Activated CD8-positive, alpha-beta T cell treated with anti-CD3 and anti-CD28 coated beads, Interleukin-2, amount 10 ng/mL, durations not matched to agents 7 days and 5 days (primary cell): ENCODE measurements at regions of chr6 and their contacts with region 1.

Region 1: DNA sequence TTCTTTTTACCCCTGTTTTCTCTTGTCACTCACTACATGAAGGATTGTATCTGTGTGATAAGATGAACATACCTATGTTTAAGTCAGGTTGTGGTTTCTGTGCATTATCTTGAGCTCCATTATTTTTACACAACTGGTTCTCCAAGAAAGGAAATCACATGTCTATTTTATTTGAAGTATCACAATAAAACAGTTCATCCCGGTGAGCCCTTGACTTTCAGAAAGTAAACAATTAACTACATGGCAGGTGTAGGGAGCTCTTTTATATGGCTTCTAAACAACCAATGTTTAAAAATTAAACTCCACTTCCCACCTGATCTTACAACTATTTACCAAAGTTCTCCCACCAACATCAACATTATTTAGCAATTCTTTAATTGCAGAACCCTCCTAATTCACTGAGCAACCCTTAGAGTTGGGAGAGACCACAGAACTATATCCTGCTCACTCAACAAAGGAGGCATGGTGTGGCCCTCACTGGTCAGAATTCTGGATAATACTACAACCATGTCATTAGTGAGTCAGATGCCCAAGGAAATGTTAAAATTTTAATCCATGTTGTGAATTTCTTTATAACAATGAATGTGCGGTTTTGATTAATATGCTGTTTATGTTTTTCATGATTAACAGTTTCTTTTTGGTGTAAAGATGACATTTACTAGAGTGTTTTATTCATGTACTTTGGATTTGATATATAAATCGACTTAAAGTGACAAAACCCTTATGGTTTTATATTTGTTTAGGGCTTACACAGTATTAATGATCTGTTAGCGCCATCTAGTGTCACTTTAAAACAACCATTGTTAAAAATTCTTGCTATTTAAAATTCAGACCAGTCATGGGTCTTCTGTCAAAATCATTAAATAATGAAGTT is 50.0 kb upstream of the SCGN start:
- DNase-seq: no peak
- ATAC-seq: no peak
- H3K4me3 Mint-ChIP-seq: no peak overlapping the region
- H3K27ac Mint-ChIP-seq: no peak overlapping the region
- H3K4me1 Mint-ChIP-seq: no peaks in the 10 kb centered on the region
- H3K27me3 Mint-ChIP-seq: no peaks in the 10 kb centered on the region

Region 2: DNA sequence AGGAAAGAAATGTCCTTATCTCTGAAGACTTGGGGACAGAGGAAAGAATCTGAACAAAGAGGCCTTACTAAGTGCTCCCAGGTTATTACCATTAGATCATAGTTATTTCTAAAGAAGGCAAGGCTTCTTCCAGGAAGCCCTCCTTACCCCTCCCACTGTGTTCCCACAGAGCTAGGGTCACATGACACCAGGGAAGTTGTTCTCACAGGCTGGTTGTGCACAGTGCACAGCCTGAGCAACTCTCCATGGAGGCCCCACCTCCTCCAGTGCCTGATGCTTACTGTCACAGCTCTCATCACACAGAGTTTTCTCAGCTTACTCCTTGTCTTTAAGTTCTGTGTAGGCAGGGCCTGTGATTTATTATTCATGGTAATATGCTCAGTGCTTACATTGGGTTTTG is 18.9 kb before region 1 on chr6:
- CTCF ChIA-PET with region 1: interaction called, 11 read pairs
- POLR2A ChIA-PET with region 1: no interaction called
- DNase-seq: peak; percentile 47
- ATAC-seq: peak; percentile 73
- H3K4me3 Mint-ChIP-seq: no peak overlapping the region
- H3K27ac Mint-ChIP-seq: no peak overlapping the region
- H3K4me1 Mint-ChIP-seq: peaks cover 31% of the 10 kb centered on the region
- H3K27me3 Mint-ChIP-seq: no peaks in the 10 kb centered on the region

Region 3: GRCh38 chr6:25590986-25591385 is 11.1 kb before region 1 on chr6:
- CTCF ChIA-PET with region 1: interaction called, 11 read pairs
- POLR2A ChIA-PET with region 1: no interaction called
- DNase-seq: no peak
- ATAC-seq: no peak
- H3K4me3 Mint-ChIP-seq: no peak overlapping the region
- H3K27ac Mint-ChIP-seq: no peak overlapping the region
- H3K4me1 Mint-ChIP-seq: no peaks in the 10 kb centered on the region
- H3K27me3 Mint-ChIP-seq: no peaks in the 10 kb centered on the region

Region 4: DNA sequence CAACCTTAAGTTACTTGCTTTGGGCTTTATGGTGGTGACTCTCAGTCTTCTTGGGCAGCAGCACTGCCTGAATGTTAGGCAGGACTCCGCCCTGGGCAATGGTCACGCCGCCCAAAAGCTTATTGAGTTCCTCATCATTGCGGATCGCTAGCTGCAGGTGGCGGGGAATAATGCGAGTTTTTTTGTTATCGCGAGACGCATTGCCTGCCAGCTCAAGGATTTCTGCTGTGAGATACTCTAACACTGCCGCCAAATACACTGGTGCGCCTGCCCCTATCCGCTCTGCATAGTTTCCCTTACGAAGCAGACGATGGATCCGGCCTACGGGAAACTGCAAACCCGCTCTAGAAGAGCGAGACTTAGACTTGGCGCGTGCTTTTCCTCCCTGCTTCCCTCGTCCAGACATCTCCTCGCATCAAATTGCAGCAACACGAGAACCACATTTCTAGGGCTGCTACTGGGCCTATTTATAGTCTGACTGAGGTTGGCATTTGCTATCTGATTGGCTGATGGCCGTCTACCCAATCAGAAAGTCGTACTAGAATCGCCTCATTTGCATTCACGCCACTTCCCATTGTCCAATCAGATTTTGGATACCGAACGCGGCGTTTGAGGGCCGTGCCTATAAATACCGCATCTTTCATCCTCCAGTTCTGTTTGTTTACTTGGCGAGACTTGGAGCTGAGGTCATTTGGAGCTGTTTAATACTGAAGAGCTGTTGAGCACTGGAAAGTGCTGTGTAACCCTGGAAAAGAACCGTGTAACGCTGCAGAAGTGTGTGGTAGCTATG is 124.3 kb after region 1 on chr6:
- CTCF ChIA-PET with region 1: no interaction called
- POLR2A ChIA-PET with region 1: no interaction called
- DNase-seq: no peak
- ATAC-seq: no peak
- H3K4me3 Mint-ChIP-seq: no peak overlapping the region
- H3K27ac Mint-ChIP-seq: no peak overlapping the region
- H3K4me1 Mint-ChIP-seq: no peaks in the 10 kb centered on the region
- H3K27me3 Mint-ChIP-seq: peaks cover 20% of the 10 kb centered on the region

Region 5: DNA sequence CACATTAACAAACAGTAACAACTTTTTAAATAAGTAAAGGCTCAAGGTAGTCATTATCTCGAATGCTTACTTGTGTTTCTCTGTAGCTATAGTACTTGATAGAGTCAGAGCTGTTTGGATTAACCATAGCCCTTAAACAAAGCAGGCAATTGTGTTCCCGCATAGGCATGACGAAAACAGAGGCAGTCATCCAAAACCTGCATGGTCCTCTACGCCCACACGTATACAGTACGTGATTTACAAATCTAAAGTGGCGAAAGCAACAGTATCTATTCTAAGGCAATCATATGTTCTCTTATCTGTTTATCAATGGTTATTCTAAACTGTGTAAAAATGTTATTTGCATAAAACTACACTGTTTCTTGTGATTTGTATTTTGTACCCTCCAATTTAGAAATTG is 517.0 kb after region 1 on chr6:
- CTCF ChIA-PET with region 1: no interaction called
- POLR2A ChIA-PET with region 1: no interaction called
- DNase-seq: no peak
- ATAC-seq: no peak
- H3K4me3 Mint-ChIP-seq: no peak overlapping the region
- H3K27ac Mint-ChIP-seq: no peak overlapping the region
- H3K4me1 Mint-ChIP-seq: peaks cover 46% of the 10 kb centered on the region
- H3K27me3 Mint-ChIP-seq: peaks cover 1% of the 10 kb centered on the region